Activated naive CD8-positive, alpha-beta T cell treated with anti-CD3 and anti-CD28 coated beads, Interleukin-2, amount 10 ng/mL, durations not matched to agents 7 days and 5 days (primary cell): ENCODE measurements at regions of chr13 and their contacts with region 1.

Region 1: GRCh38 chr13:45417790-45418534 is at the start of gene SLC25A30:
- DNase-seq: peak; percentile 92
- ATAC-seq: peak; percentile 91
- H3K4me3 Mint-ChIP-seq: peak within 1 kb of the TSS; percentile 96
- H3K27ac Mint-ChIP-seq: peak within 1 kb of the TSS; percentile 94
- H3K4me1 Mint-ChIP-seq: peaks cover 4% of the 10 kb centered on the region
- H3K27me3 Mint-ChIP-seq: peaks cover 2% of the 10 kb centered on the region
- total RNA-seq, gene SLC25A30: 18.6 to 19.6 TPM

Region 2: GRCh38 chr13:45393941-45394570 is 23.9 kb before region 1 on chr13:
- POLR2A ChIA-PET with region 1: interaction called, 17 read pairs
- DNase-seq: no peak
- ATAC-seq: no peak
- H3K4me3 Mint-ChIP-seq: no peak overlapping the region
- H3K27ac Mint-ChIP-seq: no peak overlapping the region
- H3K4me1 Mint-ChIP-seq: peaks cover 36% of the 10 kb centered on the region
- H3K27me3 Mint-ChIP-seq: no peaks in the 10 kb centered on the region

Region 3: DNA sequence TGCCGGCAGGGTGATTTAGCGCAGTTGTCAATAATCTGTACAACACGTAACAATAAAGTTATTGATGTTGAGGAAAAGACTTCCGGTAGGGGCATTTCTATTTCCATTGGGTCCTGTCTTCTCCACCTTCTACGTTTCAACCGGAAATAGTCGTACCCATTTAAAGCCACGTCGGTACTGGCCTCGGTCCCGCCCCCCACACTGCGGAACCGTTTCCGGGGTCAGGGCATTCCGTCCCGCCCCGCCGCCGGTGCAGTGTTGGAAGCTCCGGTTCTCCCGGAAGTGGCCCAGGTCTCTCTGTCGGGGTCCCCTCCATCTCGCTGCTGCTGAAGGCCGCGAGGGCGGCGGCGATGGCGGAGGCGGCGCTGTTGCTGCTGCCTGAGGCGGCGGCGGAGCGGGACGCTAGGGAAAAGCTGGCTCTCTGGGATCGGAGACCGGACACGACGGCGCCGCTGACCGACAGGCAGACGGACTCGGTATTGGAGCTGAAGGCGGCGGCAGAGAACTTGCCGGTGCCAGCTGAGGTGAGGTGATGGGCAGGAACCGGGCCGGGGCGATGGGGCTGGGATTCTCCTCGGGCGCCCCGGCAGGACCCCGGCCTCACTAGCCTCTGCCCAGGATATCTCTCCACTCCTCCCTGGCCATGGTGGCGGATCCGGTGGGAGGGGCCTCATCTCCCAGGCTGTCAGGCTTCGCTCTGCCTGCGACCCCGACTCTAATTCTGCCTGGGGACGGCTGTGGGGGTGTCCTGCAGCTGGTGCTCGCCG is 46.9 kb after region 1 on chr13 and contains the start of gene COG3:
- POLR2A ChIA-PET with region 1: interaction called, 12 read pairs
- DNase-seq: peak; percentile 93
- ATAC-seq: peak; percentile 96
- H3K4me3 Mint-ChIP-seq: peak within 1 kb of the TSS; percentile 89
- H3K27ac Mint-ChIP-seq: peak within 1 kb of the TSS; percentile 89
- H3K4me1 Mint-ChIP-seq: peaks cover 34% of the 10 kb centered on the region
- H3K27me3 Mint-ChIP-seq: no peaks in the 10 kb centered on the region
- total RNA-seq, gene COG3: 26.2 to 28.4 TPM